ENCODE measurements at regions of chrX and their contacts with region 1.

Region 1: DNA sequence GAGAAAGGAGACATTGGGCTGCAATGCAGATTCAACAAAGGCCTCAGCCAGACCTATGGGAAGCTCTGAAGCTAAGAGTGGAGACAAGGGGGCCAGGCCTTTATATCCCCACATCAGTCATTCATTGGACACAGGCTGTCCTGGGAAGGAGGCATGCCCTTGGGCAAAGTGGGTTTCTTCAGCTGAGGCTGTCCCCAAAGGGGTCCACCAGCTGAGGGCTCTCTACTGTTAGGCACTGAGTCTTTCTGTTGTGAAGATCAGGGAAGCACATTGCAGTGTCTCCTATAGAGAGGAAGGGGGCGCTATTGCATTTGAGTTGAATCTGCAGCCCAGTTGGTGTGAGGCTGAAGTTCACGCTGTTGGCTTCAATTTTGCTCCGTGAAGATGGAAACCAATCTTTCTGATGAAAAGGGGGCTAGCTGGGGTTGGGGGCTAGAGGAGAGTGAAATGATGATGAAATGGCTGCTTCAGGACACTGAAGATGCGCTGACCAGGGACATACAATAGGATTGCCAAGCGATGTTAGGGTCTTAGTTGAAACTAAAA is 48.0 kb downstream of the SLC25A5 start:
- DNase-seq: no peak
- H3K4me3 ChIP-seq: no peak overlapping the region
- H3K27ac ChIP-seq: no peak overlapping the region
- H3K4me1 ChIP-seq: no peaks in the 10 kb centered on the region
- H3K27me3 ChIP-seq: no peaks in the 10 kb centered on the region
- CTCF ChIP-seq: peak; percentile 75

Region 2: DNA sequence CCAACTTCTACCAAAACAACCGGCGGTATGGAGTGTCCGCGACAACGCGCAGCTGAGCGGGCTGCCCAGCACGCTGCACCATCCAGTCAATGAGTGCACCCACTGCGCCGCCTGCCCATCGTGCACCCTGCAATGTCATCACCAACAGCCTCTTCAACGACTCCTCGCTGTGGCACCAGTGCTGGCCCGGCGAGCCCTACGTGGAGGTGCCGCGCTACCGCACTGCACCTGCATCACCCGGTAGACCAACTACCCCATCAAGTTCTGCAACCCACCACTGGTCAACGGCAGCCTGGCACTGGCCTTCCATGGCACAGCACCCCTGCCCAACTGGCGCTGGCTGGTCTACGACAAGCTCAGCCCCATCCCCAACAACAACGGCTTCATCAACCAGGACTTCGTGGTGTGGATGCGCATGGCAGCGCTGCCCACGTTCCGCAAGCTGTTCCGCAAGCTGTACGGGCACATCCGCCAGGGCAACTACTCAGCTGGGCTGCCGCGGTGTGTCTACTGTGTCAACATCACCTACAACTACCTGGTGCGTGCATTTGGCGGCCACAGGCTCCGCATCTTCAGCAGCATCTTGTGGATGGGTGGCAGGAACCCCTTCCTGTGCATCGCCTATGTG is 746.0 kb before region 1 on chrX:
- intact Hi-C with region 1: no loop called
- DNase-seq: no peak
- H3K4me3 ChIP-seq: no peak overlapping the region
- H3K27ac ChIP-seq: no peak overlapping the region
- H3K4me1 ChIP-seq: no peaks in the 10 kb centered on the region
- H3K27me3 ChIP-seq: no peaks in the 10 kb centered on the region
- CTCF ChIP-seq: no peak

Region 3: GRCh38 chrX:119729408-119730201 is 213.4 kb after region 1 on chrX:
- intact Hi-C with region 1: loop called (anchors 10 kb)
- DNase-seq: peak; percentile 26
- H3K4me3 ChIP-seq: no peak overlapping the region
- H3K27ac ChIP-seq: no peak overlapping the region
- H3K4me1 ChIP-seq: no peaks in the 10 kb centered on the region
- H3K27me3 ChIP-seq: no peaks in the 10 kb centered on the region
- CTCF ChIP-seq: peak; percentile 68

Region 4: GRCh38 chrX:119887721-119888425 is 371.6 kb after region 1 on chrX:
- intact Hi-C with region 1: no loop called
- DNase-seq: peak; percentile 62
- H3K4me3 ChIP-seq: peak overlapping the region; percentile 56
- H3K27ac ChIP-seq: no peak overlapping the region
- H3K4me1 ChIP-seq: peaks cover 2% of the 10 kb centered on the region
- H3K27me3 ChIP-seq: no peaks in the 10 kb centered on the region
- CTCF ChIP-seq: peak; percentile 59